ENCODE measurements at regions of chr20 and their contacts with region 1.

Region 1: GRCh38 chr20:62875419-62876361 is 14.1 kb upstream of the TCFL5 start:
- DNase-seq: peak; percentile 83
- ATAC-seq: peak; percentile 98
- H3K4me3 ChIP-seq: peak overlapping the region; percentile 42; the same call in 1 of the 2 replicates
- H3K27ac ChIP-seq: peak overlapping the region; percentile 32
- H3K4me1 ChIP-seq: peaks cover 7% of the 10 kb centered on the region; the same call in 1 of the 2 replicates
- H3K27me3 ChIP-seq: 0 out of 2 replicates have a peak, but pooled peaks cover under 1% of the 10 kb centered on the region
- CTCF ChIP-seq: peak; percentile 64
- POLR2A ChIP-seq: no peak
- RAD21 ChIP-seq: peak; percentile 50

Region 2: GRCh38 chr20:62675156-62675876 is 200.4 kb before region 1 on chr20:
- CTCF ChIA-PET with region 1: no interaction called
- POLR2A ChIA-PET with region 1: no interaction called
- dilution Hi-C with region 1: no loop called
- in situ Hi-C with region 1: no loop called
- intact Hi-C with region 1: no loop called
- DNase-seq: no peak
- ATAC-seq: peak; percentile 63
- H3K4me3 ChIP-seq: no peak overlapping the region
- H3K27ac ChIP-seq: no peak overlapping the region
- H3K4me1 ChIP-seq: peaks cover 3% of the 10 kb centered on the region; the same call in 1 of the 2 replicates
- H3K27me3 ChIP-seq: peaks cover 5% of the 10 kb centered on the region; the same call in 1 of the 2 replicates
- CTCF ChIP-seq: no peak
- POLR2A ChIP-seq: no peak
- RAD21 ChIP-seq: no peak

Region 3: GRCh38 chr20:62887147-62887859 is 11.6 kb after region 1 on chr20:
- CTCF ChIA-PET with region 1: interaction called, 12 read pairs
- POLR2A ChIA-PET with region 1: no interaction called
- dilution Hi-C with region 1: no loop called
- in situ Hi-C with region 1: no loop called
- intact Hi-C with region 1: no loop called
- DNase-seq: peak; percentile 96
- ATAC-seq: peak; percentile 94
- H3K4me3 ChIP-seq: no peak overlapping the region
- H3K27ac ChIP-seq: peak overlapping the region; percentile 45
- H3K4me1 ChIP-seq: peaks cover 11% of the 10 kb centered on the region
- H3K27me3 ChIP-seq: no peaks in the 10 kb centered on the region
- CTCF ChIP-seq: 0 out of 2 replicates have a peak, but pooled peaks have one; percentile 16
- POLR2A ChIP-seq: no peak
- RAD21 ChIP-seq: no peak